Esophagus squamous epithelium (tissue), 5 donors: ENCODE measurements at regions of chr6 and their contacts with region 1.

Region 1: DNA sequence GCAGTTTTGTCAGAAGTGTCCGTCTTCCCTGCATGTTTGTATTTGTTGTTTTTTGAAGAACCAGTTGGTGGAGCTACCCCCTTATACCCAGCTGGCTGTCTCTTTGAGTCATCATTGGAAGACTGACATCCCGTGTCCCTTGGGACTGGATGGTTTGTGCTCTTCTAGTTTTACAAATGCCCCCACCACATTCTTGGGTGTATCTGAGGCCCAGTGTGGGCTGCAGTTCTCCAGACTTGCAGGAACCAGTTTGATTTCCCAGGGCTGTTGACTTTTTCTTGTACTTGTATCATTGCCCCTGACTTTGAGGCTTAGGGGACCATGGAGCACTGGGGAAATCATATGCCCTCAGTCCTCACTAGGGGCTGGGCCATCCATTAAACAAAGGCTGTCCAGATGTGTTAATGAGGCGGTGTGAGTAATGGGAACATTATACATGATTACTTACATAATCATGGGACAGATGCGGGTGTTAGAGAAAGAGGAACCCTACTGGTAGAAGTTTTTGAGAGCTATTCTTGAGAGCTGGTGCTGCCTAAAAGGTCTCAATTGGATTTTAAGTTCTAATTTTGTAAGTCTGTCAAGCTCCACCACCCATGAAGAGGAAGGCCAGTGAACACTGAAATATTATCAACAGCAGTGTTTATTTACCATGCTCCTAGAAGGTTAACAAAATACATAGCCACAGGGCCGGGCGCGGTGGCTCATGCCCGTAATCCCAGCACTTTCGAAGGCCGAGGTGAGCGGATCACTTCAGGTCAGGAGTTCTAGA is 8.4 kb downstream of the JARID2 start:
- DNase-seq: no peak
- H3K4me3 ChIP-seq: no peak overlapping the region
- H3K27ac ChIP-seq: no peak overlapping the region
- H3K4me1 ChIP-seq: peaks cover 26 to 97% (median 42%) of the 10 kb centered on the region in 3 donors
- H3K27me3 ChIP-seq: no peaks in the 10 kb centered on the region
- CTCF ChIP-seq: no peak
- POLR2A ChIP-seq: no peak

Region 2: GRCh38 chr6:14754751-14755513 is 499.3 kb before region 1 on chr6:
- intact Hi-C with region 1: no loop called
- DNase-seq: no peak
- H3K4me3 ChIP-seq: no peak overlapping the region
- H3K27ac ChIP-seq: no peak overlapping the region
- H3K4me1 ChIP-seq: no peaks in the 10 kb centered on the region
- H3K27me3 ChIP-seq: no peaks in the 10 kb centered on the region
- CTCF ChIP-seq: no peak
- POLR2A ChIP-seq: no peak

Region 3: DNA sequence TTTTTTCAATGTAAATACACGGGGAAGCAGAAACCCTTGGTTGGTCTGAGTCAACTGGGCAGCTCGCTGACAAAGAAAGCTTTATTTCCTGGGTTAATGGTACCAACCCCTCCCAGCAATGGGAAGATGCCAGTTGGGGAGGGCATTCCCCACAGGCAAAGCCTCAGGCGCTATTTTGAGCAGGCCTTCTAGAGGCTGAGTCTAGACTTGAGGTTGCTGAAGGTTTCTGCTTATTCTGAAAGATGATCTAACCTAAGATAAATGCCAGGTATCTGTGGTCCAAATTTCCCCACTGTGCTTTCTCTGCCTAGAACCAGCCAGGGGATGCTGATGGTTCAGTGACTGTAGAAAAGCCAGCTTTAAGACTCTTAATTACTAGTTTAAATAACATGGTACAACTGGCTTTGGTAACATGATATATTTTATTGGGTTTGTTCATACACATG is 180.9 kb before region 1 on chr6:
- intact Hi-C with region 1: no loop called
- DNase-seq: no peak
- H3K4me3 ChIP-seq: no peak overlapping the region
- H3K27ac ChIP-seq: peak overlapping the region in 1 of 4 donors; percentile 13
- H3K4me1 ChIP-seq: peaks cover 0 to 10% (median 0%) of the 10 kb centered on the region in 3 donors
- H3K27me3 ChIP-seq: no peaks in the 10 kb centered on the region
- CTCF ChIP-seq: no peak
- POLR2A ChIP-seq: no peak

Region 4: GRCh38 chr6:15429141-15430110 is 175.2 kb after region 1 on chr6:
- intact Hi-C with region 1: loop called (anchors 10 kb)
- DNase-seq: no peak
- H3K4me3 ChIP-seq: no peak overlapping the region
- H3K27ac ChIP-seq: peak overlapping the region in 1 of 4 donors; percentile 59
- H3K4me1 ChIP-seq: peaks cover 9 to 87% (median 36%) of the 10 kb centered on the region in 3 donors
- H3K27me3 ChIP-seq: no peaks in the 10 kb centered on the region
- CTCF ChIP-seq: no peak
- POLR2A ChIP-seq: no peak

Region 5: GRCh38 chr6:15491255-15491985 is 237.2 kb after region 1 on chr6:
- intact Hi-C with region 1: no loop called
- DNase-seq: no peak
- H3K4me3 ChIP-seq: no peak overlapping the region
- H3K27ac ChIP-seq: peak overlapping the region in 3 of 4 donors; percentile 4 to 54 (median 36)
- H3K4me1 ChIP-seq: peaks cover 0 to 38% (median 4%) of the 10 kb centered on the region in 3 donors
- H3K27me3 ChIP-seq: no peaks in the 10 kb centered on the region
- CTCF ChIP-seq: peak; percentile 70 to 94 (median 88)
- POLR2A ChIP-seq: no peak